ENCODE measurements at regions of chr10 and their contacts with region 1.

Region 1: DNA sequence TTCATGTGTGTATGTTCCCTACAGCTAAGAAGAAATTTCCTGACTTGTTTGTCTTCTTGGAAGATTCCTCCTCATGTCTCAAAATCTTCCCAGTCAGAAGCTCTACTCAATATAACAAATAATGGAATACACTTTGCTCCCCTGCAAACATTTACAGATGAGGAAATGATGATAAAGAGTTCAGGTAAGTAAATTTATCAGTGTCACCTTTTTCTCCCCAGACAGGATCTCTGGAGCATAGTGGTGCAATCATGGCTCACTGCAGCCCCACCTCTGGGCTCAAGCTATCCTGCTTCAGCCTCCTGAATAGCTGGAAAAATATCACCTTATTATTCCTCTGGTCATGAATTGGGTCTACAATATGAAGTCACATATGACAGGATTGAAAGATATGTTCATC is 25.5 kb downstream of the ACADSB start:
- DNase-seq: no peak
- ATAC-seq: no peak
- H3K4me3 ChIP-seq: no peak overlapping the region
- H3K27ac ChIP-seq: no peak overlapping the region
- H3K4me1 ChIP-seq: no peaks in the 10 kb centered on the region
- H3K27me3 ChIP-seq: no peaks in the 10 kb centered on the region
- CTCF ChIP-seq: no peak
- POLR2A ChIP-seq: no peak
- RAD21 ChIP-seq: no peak

Region 2: GRCh38 chr10:122786269-122786668 is 248.1 kb before region 1 on chr10:
- CTCF ChIA-PET with region 1: no interaction called
- POLR2A ChIA-PET with region 1: no interaction called
- RAD21 ChIA-PET with region 1: no interaction called
- intact Hi-C with region 1: no loop called
- DNase-seq: no peak
- ATAC-seq: no peak
- H3K4me3 ChIP-seq: no peak overlapping the region
- H3K27ac ChIP-seq: no peak overlapping the region
- H3K4me1 ChIP-seq: no peaks in the 10 kb centered on the region
- H3K27me3 ChIP-seq: peaks cover 40% of the 10 kb centered on the region
- CTCF ChIP-seq: no peak
- POLR2A ChIP-seq: no peak
- RAD21 ChIP-seq: no peak

Region 3: GRCh38 chr10:122845783-122846332 is 188.5 kb before region 1 on chr10 and contains the start of gene CUZD1:
- CTCF ChIA-PET with region 1: no interaction called
- POLR2A ChIA-PET with region 1: no interaction called
- RAD21 ChIA-PET with region 1: no interaction called
- intact Hi-C with region 1: no loop called
- DNase-seq: no peak
- ATAC-seq: 0 out of 2 replicates have a peak, but pooled peaks have one; percentile 17
- H3K4me3 ChIP-seq: no peak within 1 kb of the TSS
- H3K27ac ChIP-seq: no peak within 1 kb of the TSS
- H3K4me1 ChIP-seq: peaks cover 0 to 4% of the 10 kb centered on the region in 2 experiments; a peak in 2 of 4 replicates
- H3K27me3 ChIP-seq: no peaks in the 10 kb centered on the region
- CTCF ChIP-seq: no peak
- POLR2A ChIP-seq: no peak
- RAD21 ChIP-seq: no peak
- total RNA-seq, gene CUZD1: 1.7 TPM

Region 4: DNA sequence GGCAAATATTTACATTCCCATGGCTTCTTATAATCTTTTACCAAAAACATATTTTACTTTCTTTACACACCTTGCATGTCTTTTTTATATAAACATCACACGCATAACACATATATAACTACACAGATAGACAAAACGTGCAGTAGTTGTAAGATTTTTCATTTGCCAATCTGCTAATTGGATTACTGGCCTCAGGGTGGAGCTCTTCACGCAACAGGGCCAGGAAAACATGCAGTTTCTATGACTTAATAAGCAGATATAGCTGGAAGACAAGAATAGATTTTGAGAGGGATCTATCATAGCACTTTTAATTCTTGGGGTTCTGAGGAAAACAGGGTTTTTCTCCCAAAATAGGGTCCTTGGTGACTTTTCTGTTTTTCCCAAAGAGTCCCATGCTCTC is 12.8 kb before region 1 on chr10:
- CTCF ChIA-PET with region 1: interaction called, 14 read pairs
- POLR2A ChIA-PET with region 1: no interaction called
- RAD21 ChIA-PET with region 1: no interaction called
- intact Hi-C with region 1: no loop called
- DNase-seq: peak; percentile 29
- ATAC-seq: peak; percentile 86
- H3K4me3 ChIP-seq: no peak overlapping the region
- H3K27ac ChIP-seq: no peak overlapping the region
- H3K4me1 ChIP-seq: no peaks in the 10 kb centered on the region
- H3K27me3 ChIP-seq: no peaks in the 10 kb centered on the region
- CTCF ChIP-seq: peak; percentile 41 to 83 (median 80); a peak in 5 of 6 replicates
- POLR2A ChIP-seq: no peak
- RAD21 ChIP-seq: peak; percentile 50; the same call in 1 of the 2 replicates

Measured in HCT116 (cell line).